ENCODE measurements at regions of chr16 and their contacts with region 1.

Region 1: DNA sequence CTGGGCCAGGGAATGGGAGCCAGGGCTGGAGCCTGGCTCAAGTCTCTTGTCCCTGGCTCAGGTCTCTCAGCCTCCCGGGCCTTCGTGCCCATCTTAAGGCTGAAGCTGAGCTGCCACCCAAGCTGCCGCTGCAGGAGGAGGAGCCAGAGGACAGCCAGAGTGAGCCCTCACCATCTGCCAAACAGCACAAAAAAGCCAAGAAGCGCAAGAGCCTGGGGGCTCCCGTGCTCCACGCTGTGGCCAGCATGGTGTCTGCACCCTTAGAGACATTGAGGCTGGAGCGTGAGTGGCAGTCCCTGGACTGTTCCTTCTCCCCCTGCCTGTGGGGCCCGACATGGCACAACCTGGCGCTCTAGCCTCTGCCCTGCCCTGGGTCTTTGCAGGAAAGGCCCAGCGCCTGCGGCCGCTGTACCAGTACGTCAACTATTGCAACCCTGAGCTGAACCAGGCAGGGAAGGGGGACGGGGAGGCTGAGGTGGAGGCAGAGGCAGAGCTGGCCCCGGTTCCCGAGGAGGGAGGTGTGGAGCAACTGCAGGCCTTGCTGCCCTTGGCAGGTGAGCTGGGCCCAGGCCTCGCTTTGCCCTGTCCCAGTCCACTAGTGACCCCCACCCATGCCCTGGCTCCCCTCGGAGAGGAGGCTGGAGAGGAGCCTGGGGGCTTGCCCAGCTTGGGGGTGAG is 1.3 kb downstream of the C16orf86 start:
- DNase-seq: peak; percentile 61 to 88 (median 82)
- ATAC-seq: peak; percentile 93
- H3K4me3 ChIP-seq: peak overlapping the region; percentile 56
- H3K4me3 Mint-ChIP-seq: peak overlapping the region; percentile 42 to 96 (median 82)
- H3K27ac ChIP-seq: peak overlapping the region; percentile 73
- H3K27ac Mint-ChIP-seq: peak overlapping the region in 6 of 9 donors; percentile 31 to 67 (median 58)
- H3K4me1 ChIP-seq: peaks cover 9 to 12% of the 10 kb centered on the region in 2 donors
- H3K4me1 Mint-ChIP-seq: peaks cover 10 to 32% (median 17%) of the 10 kb centered on the region in 7 donors
- H3K27me3 ChIP-seq: no peaks in the 10 kb centered on the region
- H3K27me3 Mint-ChIP-seq: no peaks in the 10 kb centered on the region

Region 2: GRCh38 chr16:67546761-67547422 is 121.1 kb before region 1 on chr16:
- CTCF ChIA-PET with region 1: interaction called, 85 read pairs
- POLR2A ChIA-PET with region 1: interaction called, 41 read pairs
- intact Hi-C with region 1: loop called (anchors 1 kb)
- DNase-seq: peak; percentile 57 to 78 (median 70)
- ATAC-seq: peak; percentile 55
- H3K4me3 ChIP-seq: peak overlapping the region; percentile 56
- H3K4me3 Mint-ChIP-seq: peak overlapping the region; percentile 75 to 92 (median 86)
- H3K27ac ChIP-seq: peak overlapping the region; percentile 70
- H3K27ac Mint-ChIP-seq: peak overlapping the region; percentile 59 to 99 (median 97)
- H3K4me1 ChIP-seq: peaks cover 19 to 40% of the 10 kb centered on the region in 2 donors
- H3K4me1 Mint-ChIP-seq: peaks cover 25 to 56% (median 51%) of the 10 kb centered on the region in 7 donors
- H3K27me3 ChIP-seq: no peaks in the 10 kb centered on the region
- H3K27me3 Mint-ChIP-seq: no peaks in the 10 kb centered on the region

Region 3: GRCh38 chr16:67571981-67572431 is 96.0 kb before region 1 on chr16:
- CTCF ChIA-PET with region 1: no interaction called
- POLR2A ChIA-PET with region 1: no interaction called
- intact Hi-C with region 1: no loop called
- DNase-seq: no peak
- ATAC-seq: no peak
- H3K4me3 ChIP-seq: no peak overlapping the region
- H3K4me3 Mint-ChIP-seq: no peak overlapping the region
- H3K27ac ChIP-seq: no peak overlapping the region
- H3K27ac Mint-ChIP-seq: peak overlapping the region in 3 of 9 donors; percentile 15 to 65 (median 40)
- H3K4me1 ChIP-seq: peaks cover 0 to 4% of the 10 kb centered on the region in 2 donors
- H3K4me1 Mint-ChIP-seq: peaks cover 7 to 46% (median 28%) of the 10 kb centered on the region in 7 donors
- H3K27me3 ChIP-seq: no peaks in the 10 kb centered on the region
- H3K27me3 Mint-ChIP-seq: no peaks in the 10 kb centered on the region

Region 4: GRCh38 chr16:67613808-67614207 is 54.1 kb before region 1 on chr16:
- CTCF ChIA-PET with region 1: no interaction called
- POLR2A ChIA-PET with region 1: no interaction called
- intact Hi-C with region 1: no loop called
- DNase-seq: no peak
- ATAC-seq: no peak
- H3K4me3 ChIP-seq: no peak overlapping the region
- H3K4me3 Mint-ChIP-seq: no peak overlapping the region
- H3K27ac ChIP-seq: no peak overlapping the region
- H3K27ac Mint-ChIP-seq: no peak overlapping the region
- H3K4me1 ChIP-seq: no peaks in the 10 kb centered on the region
- H3K4me1 Mint-ChIP-seq: peaks cover 0 to 4% (median 0%) of the 10 kb centered on the region in 7 donors
- H3K27me3 ChIP-seq: no peaks in the 10 kb centered on the region
- H3K27me3 Mint-ChIP-seq: no peaks in the 10 kb centered on the region

Region 5: GRCh38 chr16:67641779-67642708 is 25.9 kb before region 1 on chr16:
- CTCF ChIA-PET with region 1: interaction called, 12 read pairs
- POLR2A ChIA-PET with region 1: interaction called, 18 read pairs
- intact Hi-C with region 1: loop called (anchors 1 kb)
- DNase-seq: no peak
- ATAC-seq: no peak
- H3K4me3 ChIP-seq: no peak overlapping the region
- H3K4me3 Mint-ChIP-seq: no peak overlapping the region
- H3K27ac ChIP-seq: no peak overlapping the region
- H3K27ac Mint-ChIP-seq: peak overlapping the region in 2 of 9 donors; percentile 55 to 75
- H3K4me1 ChIP-seq: peaks cover 9 to 15% of the 10 kb centered on the region in 2 donors
- H3K4me1 Mint-ChIP-seq: peaks cover 0 to 24% (median 13%) of the 10 kb centered on the region in 7 donors
- H3K27me3 ChIP-seq: no peaks in the 10 kb centered on the region
- H3K27me3 Mint-ChIP-seq: no peaks in the 10 kb centered on the region

Region 6: DNA sequence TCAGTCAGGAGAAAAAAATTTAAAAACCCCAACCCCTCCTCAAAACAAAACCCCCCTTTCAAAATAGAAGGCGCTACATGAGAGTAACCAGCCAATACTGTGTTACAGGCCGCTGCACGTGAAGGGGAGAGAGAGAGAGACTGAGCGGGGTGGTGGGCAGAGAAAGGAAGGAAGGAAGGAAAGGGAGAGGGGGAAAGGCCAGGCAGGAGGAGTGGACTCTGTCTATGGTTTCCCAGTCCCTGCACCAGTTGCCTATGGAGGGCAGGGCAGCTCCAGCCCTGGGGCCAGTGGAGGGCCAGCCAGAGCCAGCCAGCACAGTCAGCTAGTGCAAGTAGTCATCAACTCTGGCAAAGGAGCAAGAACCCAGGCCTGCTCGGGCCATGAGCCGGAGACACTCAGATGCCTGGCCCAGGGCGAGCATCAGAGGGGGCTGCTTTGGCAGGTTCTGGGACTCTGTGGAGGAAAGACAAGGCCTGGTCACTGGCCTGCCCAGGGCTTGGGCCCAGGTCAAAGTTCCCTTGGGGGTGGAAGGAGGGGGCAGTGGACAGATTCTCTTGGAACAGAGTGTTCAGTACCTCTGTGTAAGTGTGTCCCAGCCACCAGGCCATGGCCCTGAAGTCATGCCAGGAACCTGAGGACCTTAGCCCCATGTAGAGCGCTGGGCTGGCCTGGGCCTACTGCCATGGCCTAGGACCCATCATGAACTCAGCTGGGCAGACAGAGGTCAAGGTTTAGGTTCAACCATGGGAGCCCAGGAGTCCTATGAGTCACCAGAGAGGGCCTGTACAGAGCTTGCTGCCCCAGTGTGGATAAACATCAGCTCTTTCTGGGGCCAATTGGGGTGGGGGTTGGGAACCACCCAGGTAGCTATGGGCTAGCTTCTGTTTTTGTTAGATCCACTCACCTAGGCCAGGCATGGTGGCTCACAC is 58.4 kb after region 1 on chr16:
- CTCF ChIA-PET with region 1: no interaction called
- POLR2A ChIA-PET with region 1: no interaction called
- intact Hi-C with region 1: no loop called
- DNase-seq: no peak
- ATAC-seq: no peak
- H3K4me3 ChIP-seq: no peak overlapping the region
- H3K4me3 Mint-ChIP-seq: no peak overlapping the region
- H3K27ac ChIP-seq: no peak overlapping the region
- H3K27ac Mint-ChIP-seq: peak overlapping the region in 2 of 9 donors; percentile 20 to 67
- H3K4me1 ChIP-seq: no peaks in the 10 kb centered on the region
- H3K4me1 Mint-ChIP-seq: no peaks in the 10 kb centered on the region
- H3K27me3 ChIP-seq: no peaks in the 10 kb centered on the region
- H3K27me3 Mint-ChIP-seq: no peaks in the 10 kb centered on the region

Region 7: GRCh38 chr16:67800338-67800926 is 132.5 kb after region 1 on chr16:
- CTCF ChIA-PET with region 1: no interaction called
- POLR2A ChIA-PET with region 1: no interaction called
- intact Hi-C with region 1: no loop called
- DNase-seq: no peak
- ATAC-seq: peak; percentile 36
- H3K4me3 ChIP-seq: no peak overlapping the region
- H3K4me3 Mint-ChIP-seq: peak overlapping the region in 3 of 10 donors; percentile 5 to 76 (median 56)
- H3K27ac ChIP-seq: no peak overlapping the region
- H3K27ac Mint-ChIP-seq: peak overlapping the region in 8 of 9 donors; percentile 28 to 78 (median 62)
- H3K4me1 ChIP-seq: peaks cover 28 to 37% of the 10 kb centered on the region in 2 donors
- H3K4me1 Mint-ChIP-seq: peaks cover 45 to 81% (median 73%) of the 10 kb centered on the region in 7 donors
- H3K27me3 ChIP-seq: no peaks in the 10 kb centered on the region
- H3K27me3 Mint-ChIP-seq: no peaks in the 10 kb centered on the region

Region 8: DNA sequence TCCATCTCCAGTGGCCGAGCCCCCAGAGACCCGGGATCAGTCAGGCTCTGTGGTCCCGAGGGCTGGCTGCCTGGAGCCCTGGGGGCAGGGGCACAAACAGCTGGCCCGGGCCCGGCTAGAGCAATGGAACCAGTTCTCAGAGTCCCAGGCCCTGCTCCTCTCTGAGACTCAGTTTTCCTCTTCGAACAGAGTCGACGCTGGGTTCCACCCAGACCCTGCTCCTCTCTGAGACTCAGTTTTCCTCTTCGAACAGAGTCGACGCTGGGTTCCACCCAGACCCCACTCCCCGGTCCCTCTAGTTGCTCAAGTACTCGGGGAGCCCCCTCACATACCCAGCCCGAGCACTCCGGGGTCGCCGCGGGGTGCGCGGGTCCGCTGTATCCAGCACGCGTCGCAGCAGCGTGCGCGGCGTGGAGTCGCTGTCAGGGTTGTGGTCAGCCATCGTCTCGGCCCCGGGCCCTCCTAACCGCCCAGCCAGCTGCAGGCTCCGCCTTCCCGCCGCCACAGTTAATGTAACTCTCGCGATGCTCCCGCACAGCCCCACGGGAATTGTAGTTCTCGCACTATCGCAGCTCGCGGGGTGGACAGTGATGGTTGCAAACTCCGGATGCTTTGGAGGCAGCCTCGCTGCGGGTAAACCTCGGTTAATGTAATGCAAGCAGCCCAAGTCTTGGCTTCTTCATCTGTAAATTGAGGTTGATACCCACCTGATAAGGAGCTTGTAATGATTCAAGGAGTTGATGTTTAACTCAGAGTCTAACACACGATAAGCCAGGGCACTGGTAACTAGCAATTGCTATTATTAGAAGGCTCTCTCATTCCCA is 165.7 kb after region 1 on chr16:
- CTCF ChIA-PET with region 1: interaction called, 3 read pairs
- POLR2A ChIA-PET with region 1: no interaction called
- intact Hi-C with region 1: loop called in 1 of 2 experiments (anchors 10 kb)
- DNase-seq: peak; percentile 83 to 92 (median 89)
- ATAC-seq: peak; percentile 100
- H3K4me3 ChIP-seq: peak overlapping the region; percentile 82
- H3K4me3 Mint-ChIP-seq: peak overlapping the region; percentile 90 to 96 (median 93)
- H3K27ac ChIP-seq: peak overlapping the region; percentile 70
- H3K27ac Mint-ChIP-seq: peak overlapping the region; percentile 73 to 93 (median 82)
- H3K4me1 ChIP-seq: peaks cover 8 to 9% of the 10 kb centered on the region in 2 donors
- H3K4me1 Mint-ChIP-seq: peaks cover 11 to 19% (median 15%) of the 10 kb centered on the region in 7 donors
- H3K27me3 ChIP-seq: no peaks in the 10 kb centered on the region
- H3K27me3 Mint-ChIP-seq: no peaks in the 10 kb centered on the region

Region 9: DNA sequence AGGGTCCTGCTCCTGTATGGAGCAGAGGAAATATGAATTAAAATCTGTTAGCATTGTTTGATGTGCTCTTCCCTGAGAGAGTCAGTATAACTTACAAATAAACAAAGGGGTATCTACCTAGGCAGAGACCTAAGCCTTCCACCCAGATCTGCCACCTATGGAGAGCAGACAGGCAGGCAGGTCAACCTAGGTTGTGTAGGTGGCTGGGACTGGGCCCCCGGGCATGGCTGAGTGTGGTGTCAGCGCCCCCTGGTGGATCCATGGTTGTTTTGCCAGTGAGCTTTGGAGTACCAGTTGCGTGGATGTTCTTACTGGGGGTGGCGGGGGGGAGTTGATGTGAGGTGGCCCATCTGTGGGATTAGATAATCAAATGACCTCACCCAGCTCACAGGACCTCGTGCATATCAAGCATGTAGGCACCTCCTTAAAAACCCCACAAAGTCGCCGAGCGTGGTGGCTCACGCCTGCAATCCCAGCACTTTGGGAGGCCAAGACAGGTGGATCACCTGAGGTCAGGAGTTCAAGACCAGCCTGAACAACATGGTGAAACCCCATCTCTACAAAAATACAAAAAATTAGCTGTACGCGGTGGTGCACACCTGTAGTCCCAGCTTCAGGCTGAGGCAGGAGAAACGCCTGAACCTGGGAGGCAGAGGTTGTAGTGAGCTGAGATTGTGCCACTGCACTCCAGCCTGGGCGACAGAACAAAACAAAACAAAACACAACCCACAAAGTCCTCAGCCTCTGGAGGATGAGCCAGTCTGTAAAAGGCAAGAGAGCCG is 372.7 kb after region 1 on chr16:
- CTCF ChIA-PET with region 1: no interaction called
- POLR2A ChIA-PET with region 1: no interaction called
- intact Hi-C with region 1: loop called (anchors 1 to 10 kb)
- DNase-seq: peak; percentile 81 to 95 (median 87)
- ATAC-seq: peak; percentile 100
- H3K4me3 ChIP-seq: no peak overlapping the region
- H3K4me3 Mint-ChIP-seq: peak overlapping the region in 1 of 10 donors; percentile 9
- H3K27ac ChIP-seq: peak overlapping the region; percentile 26
- H3K27ac Mint-ChIP-seq: peak overlapping the region; percentile 28 to 87 (median 61)
- H3K4me1 ChIP-seq: peaks cover 4 to 5% of the 10 kb centered on the region in 2 donors
- H3K4me1 Mint-ChIP-seq: peaks cover 5 to 26% (median 18%) of the 10 kb centered on the region in 7 donors
- H3K27me3 ChIP-seq: no peaks in the 10 kb centered on the region
- H3K27me3 Mint-ChIP-seq: no peaks in the 10 kb centered on the region

Region 10: GRCh38 chr16:68237243-68238028 is 569.5 kb after region 1 on chr16:
- CTCF ChIA-PET with region 1: no interaction called
- POLR2A ChIA-PET with region 1: no interaction called
- intact Hi-C with region 1: loop called in 1 of 2 experiments (anchors 10 kb)
- DNase-seq: peak; percentile 71 to 90 (median 83)
- ATAC-seq: peak; percentile 88
- H3K4me3 ChIP-seq: peak overlapping the region; percentile 91
- H3K4me3 Mint-ChIP-seq: peak overlapping the region; percentile 90 to 99 (median 96)
- H3K27ac ChIP-seq: peak overlapping the region; percentile 67
- H3K27ac Mint-ChIP-seq: peak overlapping the region; percentile 72 to 95 (median 87)
- H3K4me1 ChIP-seq: peaks cover 6 to 10% of the 10 kb centered on the region in 2 donors
- H3K4me1 Mint-ChIP-seq: peaks cover 23 to 45% (median 34%) of the 10 kb centered on the region in 7 donors
- H3K27me3 ChIP-seq: no peaks in the 10 kb centered on the region
- H3K27me3 Mint-ChIP-seq: peaks cover 0 to 13% (median 0%) of the 10 kb centered on the region in 5 donors

Measured in naive thymus-derived CD4-positive, alpha-beta T cell (primary cell).